ENCODE measurements at regions of chr3 and their contacts with region 1.

Region 1: GRCh38 chr3:66362541-66362941 is 138.3 kb downstream of the LRIG1 start:
- DNase-seq: no peak

Region 2: GRCh38 chr3:66378256-66378823 is 15.8 kb after region 1 on chr3:
- CTCF ChIA-PET with region 1: interaction called, 11 read pairs
- POLR2A ChIA-PET with region 1: no interaction called
- DNase-seq: peak; percentile 62